ENCODE measurements at regions of chr18 and their contacts with region 1.

Region 1: DNA sequence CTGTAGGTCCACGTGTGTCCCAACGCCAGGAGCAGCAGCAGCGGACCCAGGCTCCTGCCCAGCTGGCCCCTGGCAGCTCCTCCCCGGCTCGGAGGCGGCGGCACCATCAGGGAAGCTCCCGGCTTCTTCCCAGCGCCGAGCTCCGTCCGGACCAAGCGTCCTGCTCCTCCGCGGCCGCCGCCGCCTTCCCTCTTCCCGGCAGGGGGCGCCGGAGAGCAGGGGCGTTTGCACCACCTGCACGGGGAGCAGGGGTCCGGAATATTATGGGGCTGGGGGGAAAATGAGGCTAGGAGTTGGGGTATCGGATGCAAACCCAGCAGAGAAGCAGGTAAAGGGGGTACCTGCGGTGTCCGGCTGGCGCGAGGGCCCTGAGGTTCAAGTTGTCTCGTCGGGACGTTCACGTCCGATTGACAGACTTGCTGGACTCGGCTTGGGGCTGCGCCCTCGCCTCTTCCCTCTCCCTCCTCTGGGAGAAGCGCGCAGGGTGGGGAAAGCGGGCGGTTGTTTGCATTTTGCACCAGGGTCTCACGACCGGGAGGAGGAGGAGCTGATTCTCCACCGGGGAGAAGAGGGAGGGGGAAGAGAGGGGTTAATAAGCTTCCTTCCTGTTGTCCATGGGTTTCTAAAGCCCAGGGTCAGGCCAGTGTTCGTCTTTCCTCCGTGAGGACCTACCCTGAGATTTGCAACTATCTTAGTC is at the start of gene CCBE1:
- DNase-seq: peak; percentile 77
- ATAC-seq: peak; percentile 87
- total RNA-seq, gene CCBE1: 3.6 TPM

Region 2: DNA sequence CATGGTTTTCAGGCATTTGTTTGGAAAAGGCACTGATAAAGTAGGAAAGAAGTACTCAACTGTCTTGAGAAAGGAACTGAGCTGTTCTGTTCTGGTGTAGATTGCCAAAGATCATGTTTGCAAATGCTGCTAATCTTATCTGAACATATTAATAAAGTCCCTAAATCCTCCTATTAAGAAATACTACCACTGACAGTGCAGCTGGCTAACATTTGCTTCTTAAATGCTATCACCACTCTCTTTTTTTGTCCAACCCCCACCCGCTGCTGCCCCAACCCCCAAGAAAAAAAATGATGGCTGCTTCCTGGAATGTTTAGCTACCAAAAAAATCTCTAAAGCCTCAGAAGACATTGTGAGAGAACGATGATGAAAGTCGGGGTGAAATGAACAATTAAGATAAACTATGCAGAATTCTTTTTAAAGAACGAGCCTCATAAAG is 130.8 kb before region 1 on chr18:
- intact Hi-C with region 1: loop called (anchors 10 kb)
- DNase-seq: no peak
- ATAC-seq: peak; percentile 79